ENCODE measurements at regions of chr2 and their contacts with region 1.

Region 1: GRCh38 chr2:102240640-102241370 is 54.0 kb downstream of the IL1RL2 start:
- DNase-seq: peak; percentile 65 to 94
- ATAC-seq: peak; percentile 99
- H3K4me3 ChIP-seq: no peak overlapping the region
- H3K27ac ChIP-seq: peak overlapping the region; percentile 76 to 79
- H3K4me1 ChIP-seq: peaks cover 17% of the 10 kb centered on the region
- CTCF ChIP-seq: peak; percentile 98
- EP300 ChIP-seq: no peak
- POLR2A ChIP-seq: no peak
- RAD21 ChIP-seq: peak; percentile 98 to 100

Region 2: GRCh38 chr2:101846973-101847372 is 393.8 kb before region 1 on chr2:
- CTCF ChIA-PET with region 1: no interaction called
- POLR2A ChIA-PET with region 1: no interaction called
- DNase-seq: no peak
- ATAC-seq: peak in 1 of 2 experiments; percentile 52; a peak in 2 of 6 replicates
- H3K4me3 ChIP-seq: no peak overlapping the region
- H3K27ac ChIP-seq: no peak overlapping the region
- H3K4me1 ChIP-seq: peaks cover 21% of the 10 kb centered on the region; the same call in 2 of the 3 replicates
- CTCF ChIP-seq: no peak
- EP300 ChIP-seq: no peak
- POLR2A ChIP-seq: no peak
- RAD21 ChIP-seq: no peak

Region 3: GRCh38 chr2:102033031-102033749 is 207.6 kb before region 1 on chr2:
- CTCF ChIA-PET with region 1: interaction called, 14 read pairs
- POLR2A ChIA-PET with region 1: no interaction called
- DNase-seq: peak in 1 of 2 experiments; percentile 67
- ATAC-seq: peak; percentile 65 to 86
- H3K4me3 ChIP-seq: no peak overlapping the region
- H3K27ac ChIP-seq: peak overlapping the region; percentile 71 to 82
- H3K4me1 ChIP-seq: peaks cover 32% of the 10 kb centered on the region
- CTCF ChIP-seq: no peak
- EP300 ChIP-seq: no peak
- POLR2A ChIP-seq: no peak
- RAD21 ChIP-seq: no peak

Region 4: DNA sequence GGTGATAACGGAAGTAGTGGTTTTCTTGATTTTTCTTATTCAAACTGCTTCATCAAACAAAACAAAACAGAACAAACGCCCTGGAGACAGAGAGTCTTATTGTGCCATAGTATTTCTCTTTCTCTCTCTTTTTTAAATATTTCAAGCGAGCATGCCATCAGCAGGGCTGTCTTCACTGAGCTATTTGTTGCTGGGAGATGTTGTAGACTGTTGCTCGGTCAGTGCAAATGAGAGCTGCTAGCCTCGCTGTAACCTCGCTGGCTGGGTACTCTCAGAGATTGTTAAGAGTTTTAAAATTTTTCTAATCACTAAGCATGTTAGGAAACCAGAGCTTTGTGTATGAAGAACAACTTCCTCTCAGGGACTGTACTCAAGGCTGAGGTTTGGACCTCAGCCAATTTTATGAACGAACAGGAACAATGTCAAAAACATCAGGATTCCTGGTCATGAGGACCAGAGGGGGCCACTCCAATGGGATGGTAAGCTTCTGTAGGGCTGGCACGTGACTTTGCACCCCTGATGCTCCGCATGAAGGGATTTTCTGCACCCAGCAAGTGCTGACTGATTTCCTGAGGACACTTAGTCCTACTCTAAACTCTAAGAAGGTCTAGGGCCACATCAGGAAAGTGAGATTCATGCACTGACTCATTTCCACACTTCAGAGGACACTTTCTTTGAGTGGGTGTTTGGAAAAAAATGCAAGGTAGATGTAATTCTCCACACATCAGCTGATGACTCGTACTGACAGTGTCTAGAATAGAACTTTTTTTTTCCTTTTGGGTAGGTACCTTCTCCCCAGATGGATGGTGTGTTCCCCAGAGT is 158.0 kb before region 1 on chr2:
- CTCF ChIA-PET with region 1: interaction called, 12 read pairs
- POLR2A ChIA-PET with region 1: no interaction called
- DNase-seq: peak in 1 of 2 experiments; percentile 23
- ATAC-seq: peak; percentile 66 to 78
- H3K4me3 ChIP-seq: no peak overlapping the region
- H3K27ac ChIP-seq: peak overlapping the region; percentile 57 to 60; a peak in 5 of 6 replicates
- H3K4me1 ChIP-seq: peaks cover 29% of the 10 kb centered on the region
- CTCF ChIP-seq: no peak
- EP300 ChIP-seq: no peak; a peak in 1 of 5 replicates
- POLR2A ChIP-seq: no peak
- RAD21 ChIP-seq: no peak

Region 5: GRCh38 chr2:102166189-102166845 is 74.5 kb before region 1 on chr2:
- CTCF ChIA-PET with region 1: interaction called, 26 read pairs
- POLR2A ChIA-PET with region 1: interaction called, 5 read pairs
- DNase-seq: peak in 1 of 2 experiments; percentile 52
- ATAC-seq: peak; percentile 68 to 78; a peak in 4 of 6 replicates
- H3K4me3 ChIP-seq: no peak overlapping the region
- H3K27ac ChIP-seq: peak overlapping the region; percentile 8 to 49; a peak in 4 of 6 replicates
- H3K4me1 ChIP-seq: peaks cover 11% of the 10 kb centered on the region; the same call in 2 of the 3 replicates
- CTCF ChIP-seq: peak; percentile 66
- EP300 ChIP-seq: no peak
- POLR2A ChIP-seq: no peak
- RAD21 ChIP-seq: peak; percentile 80 to 83

Region 6: DNA sequence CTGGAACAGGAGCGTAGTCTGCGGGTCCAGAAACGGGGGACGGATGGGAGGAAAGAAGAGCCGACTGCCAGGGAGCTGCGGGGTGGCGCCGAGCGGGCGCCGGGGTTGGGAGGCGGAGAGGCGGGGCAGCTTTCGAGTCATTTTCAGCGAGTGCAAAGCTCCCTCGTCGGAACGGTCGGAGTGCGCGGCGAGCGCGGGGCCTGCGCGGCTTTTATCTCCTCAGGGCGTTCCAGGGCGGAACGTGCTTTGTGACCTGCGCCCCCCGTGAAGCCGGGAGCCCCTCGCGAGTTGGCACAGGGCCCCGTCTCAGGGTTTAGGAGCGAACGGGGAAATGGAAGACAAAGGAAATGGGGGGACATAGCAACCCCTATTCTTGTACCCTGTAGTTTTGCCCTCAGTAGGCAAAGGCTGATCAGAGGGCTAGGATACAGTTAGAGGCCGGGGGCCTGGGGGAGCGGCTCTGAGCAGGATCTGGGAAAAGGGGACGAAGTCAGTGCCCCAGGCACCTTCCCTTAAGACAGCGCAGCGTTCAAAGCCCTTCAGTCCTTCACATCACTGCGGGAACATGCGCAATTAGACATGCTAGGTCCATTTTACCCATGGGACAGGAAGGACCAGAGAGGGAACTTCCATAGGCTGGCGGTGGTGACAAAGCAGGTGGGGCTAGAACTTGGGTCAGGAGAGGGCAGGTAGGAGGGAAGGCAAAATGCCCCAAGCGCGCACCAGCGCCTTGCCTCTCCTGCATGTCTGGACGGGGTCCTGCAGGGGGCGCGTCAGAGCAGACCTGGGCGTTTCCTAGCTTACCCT is 10.4 kb after region 1 on chr2:
- CTCF ChIA-PET with region 1: interaction called, 37 read pairs
- POLR2A ChIA-PET with region 1: no interaction called
- DNase-seq: peak; percentile 43 to 68
- ATAC-seq: peak; percentile 82 to 93
- H3K4me3 ChIP-seq: peak overlapping the region; percentile 50
- H3K27ac ChIP-seq: peak overlapping the region; percentile 61 to 79; a peak in 5 of 6 replicates
- H3K4me1 ChIP-seq: no peaks in the 10 kb centered on the region
- CTCF ChIP-seq: peak; percentile 72
- EP300 ChIP-seq: no peak
- POLR2A ChIP-seq: no peak
- RAD21 ChIP-seq: peak; percentile 47 to 49

Measured in A549 (cell line).